Right cardiac atrium (tissue), 5 donors: ENCODE measurements at regions of chr20 and their contacts with region 1.

Region 1: GRCh38 chr20:35699127-35699975 is at the starts of genes NFS1 and ROMO1:
- DNase-seq: peak; percentile 89 to 95 (median 95)
- ATAC-seq: peak; percentile 94 to 96
- H3K4me3 ChIP-seq: peak within 1 kb of the TSS; percentile 53
- H3K27ac ChIP-seq: peak within 1 kb of the TSS; percentile 72
- H3K4me1 ChIP-seq: peaks cover 11% of the 10 kb centered on the region
- H3K27me3 ChIP-seq: no peaks in the 10 kb centered on the region
- total RNA-seq, gene NFS1: 29.2 to 41.7 (median 35.2) TPM
- total RNA-seq, gene ROMO1: 156 to 187 (median 168) TPM

Region 2: GRCh38 chr20:35729836-35730582 is 30.7 kb after region 1 on chr20:
- intact Hi-C with region 1: loop called in 1 of 4 experiments (anchors 5 kb)
- DNase-seq: no peak
- ATAC-seq: no peak
- H3K4me3 ChIP-seq: no peak overlapping the region
- H3K27ac ChIP-seq: no peak overlapping the region
- H3K4me1 ChIP-seq: peaks cover 4% of the 10 kb centered on the region
- H3K27me3 ChIP-seq: no peaks in the 10 kb centered on the region

Region 3: DNA sequence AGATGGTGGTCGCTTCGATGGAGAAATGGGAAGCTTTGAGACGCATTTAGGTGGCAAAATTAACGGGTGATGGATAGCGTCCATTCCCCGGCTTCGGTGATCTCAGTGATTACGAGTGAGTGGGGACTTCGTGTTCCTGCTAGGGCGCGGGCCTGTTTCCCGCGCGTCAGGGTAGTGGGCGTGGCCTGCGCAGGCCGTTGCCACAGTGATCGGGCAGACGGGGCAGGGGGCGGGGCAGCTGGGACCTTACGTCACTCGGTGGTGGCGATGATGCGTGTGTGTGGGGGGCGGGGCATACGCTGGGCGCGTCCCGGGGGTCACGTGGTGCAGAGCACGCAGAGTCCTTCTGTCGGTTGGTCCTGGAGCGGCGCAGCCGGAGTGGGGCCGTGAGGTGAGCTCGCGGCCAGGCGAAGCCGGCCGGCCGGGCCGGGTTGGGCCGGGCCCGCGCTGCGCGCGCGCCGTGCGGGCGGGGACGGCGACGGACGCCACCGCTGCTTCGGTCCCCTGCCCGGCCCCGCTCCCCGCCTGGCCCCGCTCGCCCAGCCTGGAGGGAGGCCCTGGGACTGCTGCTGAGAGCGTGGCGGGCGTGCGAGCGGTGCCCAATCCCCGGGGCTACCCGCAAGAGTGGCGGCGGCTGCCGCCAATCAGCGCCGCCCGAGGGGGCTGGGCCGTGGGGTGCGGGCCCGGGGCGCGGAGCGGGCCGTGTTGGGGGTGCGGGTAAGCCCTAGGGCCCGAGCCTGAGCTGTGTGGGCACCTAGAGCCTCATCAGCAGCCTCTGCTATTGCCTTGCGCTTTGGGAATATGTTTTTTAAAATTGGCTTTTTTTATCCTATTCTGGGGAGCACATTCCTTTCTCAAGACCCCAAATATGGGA is 72.6 kb after region 1 on chr20 and contains the start of gene PHF20:
- intact Hi-C with region 1: no loop called
- DNase-seq: peak; percentile 99 to 100 (median 100)
- ATAC-seq: peak; percentile 85 to 92
- H3K4me3 ChIP-seq: peak within 1 kb of the TSS; percentile 94
- H3K27ac ChIP-seq: peak within 1 kb of the TSS; percentile 95
- H3K4me1 ChIP-seq: peaks cover 8% of the 10 kb centered on the region
- H3K27me3 ChIP-seq: no peaks in the 10 kb centered on the region
- total RNA-seq, gene PHF20: 44.6 to 56.8 (median 55.6) TPM

Region 4: DNA sequence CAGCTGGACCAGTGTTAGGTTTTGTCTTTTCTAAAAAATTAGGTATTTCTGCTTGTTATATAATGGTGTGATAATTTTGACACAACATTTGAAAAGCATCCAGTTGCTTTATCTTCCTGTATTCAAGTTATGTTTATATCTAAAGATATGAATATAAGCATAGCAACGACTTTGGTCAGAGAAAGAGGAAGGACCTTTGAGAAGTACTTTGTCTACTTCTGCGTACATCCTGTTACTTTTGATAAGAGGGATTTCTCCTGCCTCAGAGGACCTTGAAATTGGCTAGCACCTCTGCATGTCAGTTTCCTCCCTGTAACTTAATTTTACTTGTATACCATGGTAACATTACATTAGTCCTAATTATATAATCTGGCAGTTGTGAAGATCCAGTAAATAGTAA is 97.2 kb after region 1 on chr20:
- intact Hi-C with region 1: no loop called
- DNase-seq: no peak
- ATAC-seq: peak; percentile 55 to 78
- H3K4me3 ChIP-seq: no peak overlapping the region
- H3K27ac ChIP-seq: no peak overlapping the region
- H3K4me1 ChIP-seq: peaks cover 6% of the 10 kb centered on the region
- H3K27me3 ChIP-seq: no peaks in the 10 kb centered on the region